Pancreas (tissue), 10 donors: ENCODE measurements at regions of chr11 and their contacts with region 1.

Region 1: GRCh38 chr11:110195845-110196754 is 100.3 kb downstream of the RDX start:
- DNase-seq: no peak
- ATAC-seq: no peak
- H3K4me3 ChIP-seq: no peak overlapping the region
- H3K27ac ChIP-seq: no peak overlapping the region
- H3K4me1 ChIP-seq: no peaks in the 10 kb centered on the region
- H3K27me3 ChIP-seq: no peaks in the 10 kb centered on the region
- CTCF ChIP-seq: no peak

Region 2: DNA sequence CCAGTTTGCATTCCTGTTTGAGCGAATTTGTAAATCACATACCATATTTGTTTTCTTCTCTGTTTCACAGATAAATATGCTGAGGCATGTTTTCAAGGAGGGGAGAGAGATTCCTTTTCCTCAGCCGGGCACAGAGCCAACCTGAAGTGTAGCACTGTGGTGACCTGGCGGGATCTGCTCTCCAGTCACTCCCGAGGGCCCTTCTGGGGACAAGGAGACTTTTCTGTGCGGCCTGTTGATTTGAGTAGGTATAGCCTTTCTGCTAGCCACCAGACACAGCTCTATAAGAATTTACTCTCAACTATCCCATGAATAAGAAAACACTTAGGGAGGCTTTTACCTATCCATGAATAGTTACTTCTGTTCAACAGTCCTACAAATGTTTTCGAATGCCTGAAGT is 170.2 kb after region 1 on chr11:
- intact Hi-C with region 1: loop called in 2 of 3 experiments (anchors 5 kb)
- DNase-seq: peak; percentile 44 to 76 (median 68)
- ATAC-seq: peak; percentile 74 to 80 (median 76)
- H3K4me3 ChIP-seq: no peak overlapping the region
- H3K27ac ChIP-seq: peak overlapping the region in 1 of 4 donors; percentile 27
- H3K4me1 ChIP-seq: peaks cover 0 to 10% (median 7%) of the 10 kb centered on the region in 3 donors
- H3K27me3 ChIP-seq: no peaks in the 10 kb centered on the region
- CTCF ChIP-seq: no peak

Region 3: GRCh38 chr11:110376711-110377324 is 180.7 kb after region 1 on chr11:
- intact Hi-C with region 1: loop called in 1 of 3 experiments (anchors 5 kb)
- DNase-seq: peak; percentile 62 to 85 (median 80)
- ATAC-seq: peak; percentile 92 to 97 (median 94)
- H3K4me3 ChIP-seq: peak overlapping the region in 2 of 4 donors; percentile 19 to 34
- H3K27ac ChIP-seq: peak overlapping the region; percentile 35 to 76 (median 66)
- H3K4me1 ChIP-seq: peaks cover 0 to 10% (median 4%) of the 10 kb centered on the region in 3 donors
- H3K27me3 ChIP-seq: no peaks in the 10 kb centered on the region
- CTCF ChIP-seq: peak; percentile 61 to 74 (median 67)

Region 4: DNA sequence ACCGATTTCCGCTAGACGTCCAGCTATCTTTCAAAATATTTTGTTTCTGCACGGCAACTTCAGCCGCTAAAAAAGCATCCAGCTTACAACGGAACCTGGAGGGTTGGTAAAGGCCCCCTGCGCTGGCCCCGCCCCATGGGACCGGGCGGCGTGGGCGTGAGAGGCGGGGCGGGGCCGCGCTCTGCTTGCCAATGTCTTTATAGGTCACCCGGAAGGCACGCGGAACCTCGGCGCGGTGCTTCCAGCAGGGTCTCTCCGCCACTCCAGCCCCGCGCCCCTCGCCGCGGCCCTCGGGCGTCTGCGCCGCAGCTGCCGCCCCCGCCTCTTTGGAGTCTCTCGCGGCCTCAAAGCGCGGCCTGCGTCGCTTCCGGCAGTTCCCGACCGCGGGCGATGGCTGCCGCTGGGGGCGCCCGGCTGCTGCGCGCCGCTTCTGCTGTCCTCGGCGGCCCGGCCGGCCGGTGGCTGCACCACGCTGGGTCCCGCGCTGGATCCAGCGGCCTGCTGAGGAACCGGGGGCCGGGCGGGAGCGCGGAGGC is 233.7 kb after region 1 on chr11 and contains the start of gene FDX1:
- intact Hi-C with region 1: loop called in 1 of 3 experiments (anchors 10 kb)
- DNase-seq: peak; percentile 73 to 92 (median 84)
- ATAC-seq: peak; percentile 83 to 91 (median 86)
- H3K4me3 ChIP-seq: peak within 1 kb of the TSS; percentile 77 to 90 (median 83)
- H3K27ac ChIP-seq: peak within 1 kb of the TSS; percentile 87 to 97 (median 92)
- H3K4me1 ChIP-seq: peaks cover 12 to 35% (median 32%) of the 10 kb centered on the region in 3 donors
- H3K27me3 ChIP-seq: no peaks in the 10 kb centered on the region
- CTCF ChIP-seq: peak; percentile 38 to 76 (median 46)
- total RNA-seq, gene FDX1: 6.7 to 11.3 (median 8.3) TPM

Region 5: GRCh38 chr11:111148953-111149352 is 952.9 kb after region 1 on chr11:
- intact Hi-C with region 1: no loop called
- DNase-seq: no peak
- ATAC-seq: no peak
- H3K4me3 ChIP-seq: no peak overlapping the region
- H3K27ac ChIP-seq: no peak overlapping the region
- H3K4me1 ChIP-seq: no peaks in the 10 kb centered on the region
- H3K27me3 ChIP-seq: no peaks in the 10 kb centered on the region
- CTCF ChIP-seq: no peak